ENCODE measurements at regions of chr11 and their contacts with region 1.

Region 1: DNA sequence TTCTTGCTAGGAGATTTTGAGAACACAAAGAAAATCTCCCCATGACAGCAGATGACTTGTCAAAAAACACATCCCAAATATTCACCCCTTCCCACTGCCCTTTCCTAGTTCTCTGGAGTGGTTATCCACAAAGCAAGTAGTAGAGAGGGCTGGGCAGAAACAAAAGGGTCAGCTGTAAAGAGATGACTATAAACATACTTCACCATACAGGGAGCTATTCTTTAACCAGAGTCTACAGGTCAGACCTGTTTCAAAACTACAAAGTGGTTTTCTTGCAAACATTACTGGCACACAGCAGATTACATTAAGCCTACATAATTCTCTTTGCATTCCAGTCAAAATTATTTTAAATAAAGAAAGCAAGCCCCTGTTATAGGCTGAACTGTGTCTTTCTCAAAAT is 47.7 kb upstream of the NFRKB start:
- DNase-seq: no peak

Region 2: GRCh38 chr11:130413405-130414106 is 470.5 kb after region 1 on chr11:
- intact Hi-C with region 1: no loop called
- DNase-seq: no peak

Region 3: GRCh38 chr11:131157678-131158077 is 1214.6 kb after region 1 on chr11:
- intact Hi-C with region 1: loop called in 1 of 2 experiments (anchors 5 kb)
- DNase-seq: no peak

Measured in posterior vena cava (tissue), 2 donors.